ENCODE measurements at regions of chr12 and their contacts with region 1.

Region 1: DNA sequence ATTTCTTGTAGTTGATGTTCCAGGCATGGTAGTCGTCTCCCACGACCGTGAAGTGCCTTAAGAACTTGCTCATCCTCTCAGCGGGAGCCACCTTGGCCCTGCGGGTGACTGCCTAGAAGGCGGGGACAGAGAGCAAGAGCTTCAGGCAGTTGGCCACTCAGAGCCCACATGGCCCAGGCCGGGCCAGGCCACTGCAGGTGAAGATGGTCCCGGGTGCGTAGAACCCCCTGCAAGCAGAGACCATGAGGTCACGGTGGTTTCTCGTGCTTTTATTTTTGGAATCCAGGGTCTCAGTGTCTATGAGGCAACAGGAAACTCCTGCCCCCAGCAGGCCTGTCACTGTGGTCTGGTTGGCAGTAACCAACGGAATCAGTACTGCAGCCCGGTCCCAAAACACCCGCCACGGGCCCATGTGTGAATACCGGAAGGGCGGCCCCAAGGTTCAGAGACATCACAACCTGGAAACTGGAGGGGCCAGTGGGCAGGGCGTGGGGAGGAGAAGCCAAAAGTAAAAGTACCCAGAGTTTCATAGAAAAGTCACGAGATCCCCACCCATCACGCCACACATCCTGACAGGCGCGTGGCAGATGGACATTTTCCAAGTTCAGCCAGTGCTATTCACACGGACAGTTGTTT is 27.5 kb downstream of the HVCN1 start:
- DNase-seq: peak in 9 of 10 donors; percentile 29 to 78 (median 50)
- ATAC-seq: peak; percentile 86 to 87
- H3K4me3 Mint-ChIP-seq: peak overlapping the region; percentile 72 to 84 (median 78)
- H3K27ac Mint-ChIP-seq: peak overlapping the region; percentile 87 to 96 (median 92)
- H3K4me1 Mint-ChIP-seq: peaks cover 9 to 57% (median 25%) of the 10 kb centered on the region in 4 donors
- H3K27me3 Mint-ChIP-seq: no peaks in the 10 kb centered on the region

Region 2: GRCh38 chr12:110636516-110636915 is 24.9 kb before region 1 on chr12:
- POLR2A ChIA-PET with region 1: no interaction called
- DNase-seq: no peak
- ATAC-seq: no peak
- H3K4me3 Mint-ChIP-seq: no peak overlapping the region
- H3K27ac Mint-ChIP-seq: peak overlapping the region in 2 of 10 donors; percentile 10 to 28
- H3K4me1 Mint-ChIP-seq: peaks cover 19 to 70% (median 24%) of the 10 kb centered on the region in 4 donors
- H3K27me3 Mint-ChIP-seq: no peaks in the 10 kb centered on the region

Region 3: GRCh38 chr12:110718222-110718908 is 56.9 kb after region 1 on chr12:
- POLR2A ChIA-PET with region 1: interaction called, 10 read pairs
- DNase-seq: no peak
- ATAC-seq: no peak
- H3K4me3 Mint-ChIP-seq: no peak overlapping the region
- H3K27ac Mint-ChIP-seq: peak overlapping the region in 8 of 10 donors; percentile 20 to 75 (median 29)
- H3K4me1 Mint-ChIP-seq: peaks cover 0 to 14% (median 3%) of the 10 kb centered on the region in 4 donors
- H3K27me3 Mint-ChIP-seq: no peaks in the 10 kb centered on the region